Naive thymus-derived CD4-positive, alpha-beta T cell (primary cell): ENCODE measurements at regions of chr20 and their contacts with region 1.

Region 1: GRCh38 chr20:49219089-49219923 is at the start of gene DDX27:
- DNase-seq: peak; percentile 90 to 98 (median 98)
- ATAC-seq: peak; percentile 92
- H3K4me3 ChIP-seq: peak within 1 kb of the TSS; percentile 91
- H3K4me3 Mint-ChIP-seq: peak within 1 kb of the TSS; percentile 88 to 100 (median 96)
- H3K27ac ChIP-seq: peak within 1 kb of the TSS; percentile 99
- H3K27ac Mint-ChIP-seq: peak within 1 kb of the TSS; percentile 89 to 100 (median 96)
- H3K4me1 ChIP-seq: peaks cover 9 to 11% of the 10 kb centered on the region in 2 donors
- H3K4me1 Mint-ChIP-seq: peaks cover 14 to 42% (median 26%) of the 10 kb centered on the region in 7 donors
- H3K27me3 ChIP-seq: no peaks in the 10 kb centered on the region
- H3K27me3 Mint-ChIP-seq: peaks cover 0 to 2% (median 0%) of the 10 kb centered on the region in 5 donors
- total RNA-seq, gene DDX27: 43.4 to 94.1 (median 65.7) TPM

Region 2: DNA sequence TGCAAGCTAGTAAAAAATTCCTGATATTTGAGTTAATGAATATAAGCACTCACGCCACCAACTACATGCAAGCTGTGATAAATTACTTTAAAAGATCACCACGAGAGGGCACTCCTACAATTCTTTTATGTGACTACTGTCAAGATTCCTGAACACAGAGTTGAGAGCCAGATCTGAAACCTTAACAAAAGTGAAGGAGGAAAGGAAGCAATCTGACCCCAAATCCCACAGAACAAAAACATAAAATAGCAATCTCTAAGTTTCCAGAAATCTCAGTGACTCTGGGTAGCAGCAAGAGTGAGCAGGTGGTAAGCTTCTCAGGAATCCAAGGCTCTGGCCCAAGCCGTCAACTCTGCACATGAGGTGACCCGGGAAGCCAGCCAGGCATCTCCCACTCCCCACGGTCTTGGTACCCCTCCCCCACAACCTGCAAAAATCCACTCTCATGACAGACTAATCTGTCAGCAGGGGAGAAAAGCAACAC is 86.3 kb before region 1 on chr20:
- CTCF ChIA-PET with region 1: interaction called, 71 read pairs
- POLR2A ChIA-PET with region 1: interaction called, 12 read pairs
- intact Hi-C with region 1: loop called (anchors 1 kb)
- DNase-seq: peak in 7 of 9 donors; percentile 33 to 68 (median 62)
- ATAC-seq: peak; percentile 68
- H3K4me3 ChIP-seq: no peak overlapping the region
- H3K4me3 Mint-ChIP-seq: no peak overlapping the region
- H3K27ac ChIP-seq: no peak overlapping the region
- H3K27ac Mint-ChIP-seq: peak overlapping the region in 8 of 9 donors; percentile 1 to 74 (median 62)
- H3K4me1 ChIP-seq: no peaks in the 10 kb centered on the region
- H3K4me1 Mint-ChIP-seq: peaks cover 7 to 16% (median 10%) of the 10 kb centered on the region in 7 donors
- H3K27me3 ChIP-seq: peaks cover 0 to 3% of the 10 kb centered on the region in 2 donors
- H3K27me3 Mint-ChIP-seq: no peaks in the 10 kb centered on the region

Region 3: GRCh38 chr20:50379049-50379990 is 1160.0 kb after region 1 on chr20:
- CTCF ChIA-PET with region 1: no interaction called
- POLR2A ChIA-PET with region 1: no interaction called
- intact Hi-C with region 1: loop called in 1 of 2 experiments (anchors 10 kb)
- DNase-seq: no peak
- ATAC-seq: peak; percentile 63
- H3K4me3 ChIP-seq: no peak overlapping the region
- H3K4me3 Mint-ChIP-seq: peak overlapping the region in 1 of 10 donors; percentile 30
- H3K27ac ChIP-seq: no peak overlapping the region
- H3K27ac Mint-ChIP-seq: peak overlapping the region in 3 of 9 donors; percentile 9 to 73 (median 61)
- H3K4me1 ChIP-seq: peaks cover 12 to 13% of the 10 kb centered on the region in 2 donors
- H3K4me1 Mint-ChIP-seq: peaks cover 25 to 56% (median 40%) of the 10 kb centered on the region in 7 donors
- H3K27me3 ChIP-seq: no peaks in the 10 kb centered on the region
- H3K27me3 Mint-ChIP-seq: peaks cover 0 to 1% (median 0%) of the 10 kb centered on the region in 5 donors